ENCODE measurements at regions of chr10 and their contacts with region 1.

Region 1: DNA sequence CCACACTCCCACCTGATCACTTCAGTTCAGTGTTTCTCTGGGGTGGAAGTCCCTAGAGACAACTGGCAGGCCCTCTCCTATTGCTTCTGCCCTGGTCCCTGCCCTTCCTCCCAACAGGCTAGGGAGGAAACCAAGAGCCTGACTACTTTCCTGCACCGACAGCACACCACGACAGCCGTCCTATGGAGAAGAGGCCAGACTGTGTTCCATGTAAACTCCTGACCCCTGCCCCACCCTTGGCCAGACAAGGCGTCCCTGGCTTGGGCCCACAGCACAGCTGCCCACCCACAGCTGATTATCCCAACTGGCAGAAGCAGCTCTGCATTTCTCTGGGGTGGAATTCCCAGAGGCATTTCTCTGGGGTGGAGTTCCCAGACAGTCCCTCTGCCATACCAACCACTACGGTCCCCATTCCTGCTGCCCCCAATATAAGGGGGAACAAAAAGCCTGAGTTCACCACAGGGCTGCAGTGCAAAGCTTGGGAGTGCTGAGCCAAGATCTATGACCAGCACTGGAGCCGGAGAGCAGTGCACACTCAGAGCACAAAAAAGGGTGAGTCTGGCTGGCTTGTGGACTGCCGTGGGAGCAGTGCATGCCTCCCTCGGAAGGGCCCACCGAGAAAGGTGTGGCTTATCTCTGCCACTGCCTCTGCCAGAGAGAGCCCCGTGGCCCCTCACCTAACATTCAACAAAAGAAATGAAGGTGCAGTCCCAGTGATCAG is 193.4 kb downstream of the HPSE2 start:
- DNase-seq: no peak
- H3K4me3 ChIP-seq: no peak overlapping the region
- H3K4me3 Mint-ChIP-seq: no peak overlapping the region
- H3K27ac Mint-ChIP-seq: no peak overlapping the region
- H3K4me1 ChIP-seq: no peaks in the 10 kb centered on the region
- H3K4me1 Mint-ChIP-seq: no peaks in the 10 kb centered on the region
- H3K27me3 ChIP-seq: no peaks in the 10 kb centered on the region
- H3K27me3 Mint-ChIP-seq: no peaks in the 10 kb centered on the region
- CTCF ChIP-seq: no peak

Region 2: DNA sequence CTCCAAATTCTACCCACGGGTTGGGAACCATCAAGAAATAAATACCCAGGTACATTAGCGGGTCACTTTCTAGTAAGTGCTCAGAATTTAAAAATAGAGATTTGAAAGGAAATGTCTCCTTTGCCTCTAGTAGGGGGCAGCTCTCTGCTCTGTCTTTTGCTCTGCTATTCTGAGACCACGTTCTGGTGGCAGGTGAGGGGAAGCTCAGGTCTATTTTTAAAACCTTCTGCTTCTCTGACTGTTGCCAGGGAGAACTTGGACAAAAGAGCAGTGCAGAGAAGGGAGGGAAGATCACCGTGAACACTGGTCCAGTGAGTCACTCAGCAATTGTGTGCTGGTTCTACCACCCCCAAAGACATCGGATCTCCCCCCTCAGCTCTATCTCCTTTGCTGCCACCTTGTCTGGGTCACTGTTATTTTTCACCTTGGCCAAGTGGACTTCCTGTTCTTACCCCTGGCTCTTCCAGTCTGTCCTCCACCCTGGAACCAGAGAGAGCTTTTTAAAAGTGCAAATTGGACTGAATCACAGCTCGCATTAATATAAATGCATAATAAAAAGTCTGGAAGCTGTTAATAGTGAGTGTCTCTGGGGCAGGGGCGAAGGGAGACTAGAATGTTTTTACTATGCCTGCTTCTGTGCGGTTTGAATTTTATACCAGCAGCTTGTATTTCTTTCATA is 701.8 kb before region 1 on chr10:
- CTCF ChIA-PET with region 1: no interaction called
- POLR2A ChIA-PET with region 1: no interaction called
- intact Hi-C with region 1: no loop called
- DNase-seq: no peak
- H3K4me3 ChIP-seq: no peak overlapping the region
- H3K4me3 Mint-ChIP-seq: no peak overlapping the region
- H3K27ac Mint-ChIP-seq: no peak overlapping the region
- H3K4me1 ChIP-seq: no peaks in the 10 kb centered on the region
- H3K4me1 Mint-ChIP-seq: no peaks in the 10 kb centered on the region
- H3K27me3 ChIP-seq: no peaks in the 10 kb centered on the region; the same call in 1 of the 2 replicates
- H3K27me3 Mint-ChIP-seq: peaks cover 21% of the 10 kb centered on the region
- CTCF ChIP-seq: no peak

Region 3: GRCh38 chr10:98790802-98791201 is 251.4 kb before region 1 on chr10:
- CTCF ChIA-PET with region 1: no interaction called
- POLR2A ChIA-PET with region 1: no interaction called
- intact Hi-C with region 1: loop called (anchors 5 kb)
- DNase-seq: no peak
- H3K4me3 ChIP-seq: no peak overlapping the region
- H3K4me3 Mint-ChIP-seq: no peak overlapping the region
- H3K27ac Mint-ChIP-seq: no peak overlapping the region
- H3K4me1 ChIP-seq: no peaks in the 10 kb centered on the region
- H3K4me1 Mint-ChIP-seq: no peaks in the 10 kb centered on the region
- H3K27me3 ChIP-seq: no peaks in the 10 kb centered on the region
- H3K27me3 Mint-ChIP-seq: no peaks in the 10 kb centered on the region
- CTCF ChIP-seq: peak; percentile 26 to 31